ENCODE measurements at regions of chr1 and their contacts with region 1.

Region 1: DNA sequence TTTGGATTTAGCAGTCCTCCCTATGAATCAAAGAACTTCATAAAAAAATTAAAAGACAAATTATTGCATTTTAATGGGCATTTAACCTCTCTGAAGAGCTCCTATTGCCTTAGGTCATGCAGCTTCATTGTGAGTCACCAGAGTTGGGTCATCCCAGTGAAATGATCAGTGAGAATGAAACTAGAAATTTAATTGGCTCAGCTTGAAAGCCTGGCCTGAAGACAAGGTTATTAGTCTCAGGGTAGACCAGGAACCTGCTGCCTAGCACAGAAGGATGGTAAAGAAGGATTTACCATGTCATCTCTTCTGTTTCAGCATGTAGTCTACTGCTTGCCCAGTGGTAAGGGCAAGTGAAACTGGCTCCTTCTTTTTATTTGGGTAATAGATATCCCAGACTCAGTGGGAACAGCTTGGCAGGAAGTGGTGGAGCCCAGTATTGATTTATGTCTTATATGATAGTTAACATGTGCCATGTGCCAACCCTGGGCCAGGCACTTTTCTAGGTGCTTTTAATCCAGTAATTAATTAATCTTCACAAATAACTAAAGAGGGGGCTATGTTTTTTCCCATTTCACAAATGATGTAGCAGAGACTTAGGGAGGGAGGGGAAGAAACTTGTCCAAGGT is 23.6 kb downstream of the LAMC2 start:
- DNase-seq: no peak
- H3K4me3 ChIP-seq: no peak overlapping the region
- H3K27ac ChIP-seq: no peak overlapping the region
- H3K4me1 ChIP-seq: peaks cover 0 to 4% (median 2%) of the 10 kb centered on the region in 4 donors
- H3K27me3 ChIP-seq: no peaks in the 10 kb centered on the region
- CTCF ChIP-seq: no peak
- EP300 ChIP-seq: no peak
- POLR2A ChIP-seq: no peak

Region 2: GRCh38 chr1:182955596-182956588 is 253.8 kb before region 1 on chr1:
- in situ Hi-C with region 1: no loop called
- intact Hi-C with region 1: no loop called
- DNase-seq: no peak
- H3K4me3 ChIP-seq: no peak overlapping the region
- H3K27ac ChIP-seq: no peak overlapping the region
- H3K4me1 ChIP-seq: no peaks in the 10 kb centered on the region
- H3K27me3 ChIP-seq: peaks cover 21% of the 10 kb centered on the region
- CTCF ChIP-seq: no peak
- EP300 ChIP-seq: no peak
- POLR2A ChIP-seq: no peak

Region 3: DNA sequence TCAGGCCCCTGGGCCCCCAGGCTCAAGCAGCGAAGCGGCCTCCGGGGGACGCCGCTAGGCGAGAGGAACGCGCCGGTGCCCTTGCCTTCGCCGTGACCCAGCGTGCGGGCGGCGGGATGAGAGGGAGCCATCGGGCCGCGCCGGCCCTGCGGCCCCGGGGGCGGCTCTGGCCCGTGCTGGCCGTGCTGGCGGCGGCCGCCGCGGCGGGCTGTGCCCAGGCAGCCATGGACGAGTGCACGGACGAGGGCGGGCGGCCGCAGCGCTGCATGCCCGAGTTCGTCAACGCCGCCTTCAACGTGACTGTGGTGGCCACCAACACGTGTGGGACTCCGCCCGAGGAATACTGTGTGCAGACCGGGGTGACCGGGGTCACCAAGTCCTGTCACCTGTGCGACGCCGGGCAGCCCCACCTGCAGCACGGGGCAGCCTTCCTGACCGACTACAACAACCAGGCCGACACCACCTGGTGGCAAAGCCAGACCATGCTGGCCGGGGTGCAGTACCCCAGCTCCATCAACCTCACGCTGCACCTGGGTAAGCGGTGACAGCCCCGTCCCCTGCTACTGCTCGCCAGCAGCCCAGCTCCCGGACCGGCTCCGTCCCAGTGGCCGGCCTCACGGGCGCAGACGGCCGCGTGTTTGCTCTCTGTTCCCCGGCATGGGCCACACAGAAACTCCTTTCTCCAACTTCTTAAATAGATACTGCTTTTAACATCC is 185.9 kb before region 1 on chr1:
- in situ Hi-C with region 1: no loop called
- intact Hi-C with region 1: loop called (anchors 10 kb)
- DNase-seq: peak; percentile 84
- H3K4me3 ChIP-seq: peak overlapping the region; percentile 77 to 88 (median 86)
- H3K27ac ChIP-seq: peak overlapping the region; percentile 96 to 99 (median 97)
- H3K4me1 ChIP-seq: peaks cover 0 to 33% (median 8%) of the 10 kb centered on the region in 4 donors
- H3K27me3 ChIP-seq: peaks cover 10% of the 10 kb centered on the region
- CTCF ChIP-seq: peak; percentile 46 to 72 (median 56)
- EP300 ChIP-seq: no peak
- POLR2A ChIP-seq: peak; percentile 25

Region 4: DNA sequence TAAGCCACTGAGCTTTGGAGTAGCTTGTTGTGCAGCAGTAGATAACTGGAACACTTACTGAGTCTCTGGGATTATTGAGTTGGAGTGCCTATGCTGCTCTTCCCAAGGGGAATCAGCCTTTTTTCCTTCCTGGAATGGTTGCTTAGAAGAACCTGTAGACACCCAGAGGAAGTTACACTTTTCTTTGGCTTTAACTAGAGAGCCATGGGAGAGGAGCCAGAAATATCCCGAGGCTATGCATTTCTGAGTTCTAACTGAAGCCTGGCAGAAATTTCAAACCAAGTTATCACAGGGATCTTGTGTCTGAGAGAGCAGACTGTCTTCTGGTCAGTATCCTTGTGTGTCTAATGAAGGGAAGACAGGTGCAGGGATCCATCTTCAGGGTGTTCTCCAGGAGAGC is 158.1 kb before region 1 on chr1:
- in situ Hi-C with region 1: no loop called
- intact Hi-C with region 1: no loop called
- DNase-seq: no peak
- H3K4me3 ChIP-seq: no peak overlapping the region
- H3K27ac ChIP-seq: no peak overlapping the region
- H3K4me1 ChIP-seq: peaks cover 5 to 24% (median 13%) of the 10 kb centered on the region in 4 donors
- H3K27me3 ChIP-seq: no peaks in the 10 kb centered on the region
- CTCF ChIP-seq: no peak
- EP300 ChIP-seq: no peak
- POLR2A ChIP-seq: no peak

Measured in transverse colon (tissue), 4 donors.